ENCODE measurements at regions of chr6 and their contacts with region 1.

Region 1: GRCh38 chr6:2363211-2363610 is 117.8 kb upstream of the GMDS start:
- DNase-seq: no peak
- H3K4me3 ChIP-seq: no peak overlapping the region
- H3K27ac ChIP-seq: no peak overlapping the region
- H3K4me1 ChIP-seq: no peaks in the 10 kb centered on the region
- H3K27me3 ChIP-seq: no peaks in the 10 kb centered on the region
- CTCF ChIP-seq: no peak

Region 2: GRCh38 chr6:2385471-2385983 is 22.3 kb after region 1 on chr6:
- CTCF ChIA-PET with region 1: no interaction called
- POLR2A ChIA-PET with region 1: no interaction called
- intact Hi-C with region 1: loop called (anchors 1 kb)
- DNase-seq: no peak
- H3K4me3 ChIP-seq: no peak overlapping the region
- H3K27ac ChIP-seq: no peak overlapping the region
- H3K4me1 ChIP-seq: no peaks in the 10 kb centered on the region
- H3K27me3 ChIP-seq: no peaks in the 10 kb centered on the region
- CTCF ChIP-seq: no peak

Measured in PC-9 (cell line).